ENCODE measurements at regions of chr7 and their contacts with region 1.

Region 1: DNA sequence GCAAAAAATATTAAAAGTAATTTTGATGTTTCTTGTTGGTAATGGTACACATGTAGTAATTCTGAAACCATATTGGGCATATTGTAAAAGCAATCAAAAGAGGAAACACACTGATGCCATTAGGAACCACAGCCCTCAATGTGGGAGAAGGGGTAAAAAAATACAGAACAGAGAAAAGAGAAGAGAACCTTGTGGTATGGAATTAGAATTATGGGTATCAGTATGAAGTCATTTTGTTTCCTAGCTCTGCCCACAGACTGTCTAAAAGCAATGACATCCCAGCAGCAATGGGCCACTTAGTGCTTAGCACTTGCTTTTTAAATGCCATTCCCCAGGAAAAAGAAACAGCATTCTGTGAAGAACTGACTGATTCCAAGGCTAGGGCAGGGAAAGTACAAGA is 61.5 kb downstream of the CPVL start:
- DNase-seq: no peak
- H3K4me3 Mint-ChIP-seq: no peak overlapping the region
- H3K27ac Mint-ChIP-seq: no peak overlapping the region
- H3K4me1 Mint-ChIP-seq: no peaks in the 10 kb centered on the region
- H3K27me3 Mint-ChIP-seq: peaks cover 6% of the 10 kb centered on the region

Region 2: GRCh38 chr7:28456044-28456443 is 628.8 kb before region 1 on chr7:
- CTCF ChIA-PET with region 1: no interaction called
- POLR2A ChIA-PET with region 1: no interaction called
- intact Hi-C with region 1: no loop called
- DNase-seq: no peak
- H3K4me3 Mint-ChIP-seq: no peak overlapping the region
- H3K27ac Mint-ChIP-seq: no peak overlapping the region
- H3K4me1 Mint-ChIP-seq: no peaks in the 10 kb centered on the region
- H3K27me3 Mint-ChIP-seq: peaks cover 6% of the 10 kb centered on the region

Region 3: GRCh38 chr7:29035044-29035740 is 49.6 kb before region 1 on chr7:
- CTCF ChIA-PET with region 1: no interaction called
- POLR2A ChIA-PET with region 1: no interaction called
- intact Hi-C with region 1: loop called (anchors 5 kb)
- DNase-seq: peak; percentile 56
- H3K4me3 Mint-ChIP-seq: no peak overlapping the region
- H3K27ac Mint-ChIP-seq: no peak overlapping the region
- H3K4me1 Mint-ChIP-seq: peaks cover 16% of the 10 kb centered on the region
- H3K27me3 Mint-ChIP-seq: no peaks in the 10 kb centered on the region